ENCODE measurements at regions of chr11 and their contacts with region 1.

Region 1: DNA sequence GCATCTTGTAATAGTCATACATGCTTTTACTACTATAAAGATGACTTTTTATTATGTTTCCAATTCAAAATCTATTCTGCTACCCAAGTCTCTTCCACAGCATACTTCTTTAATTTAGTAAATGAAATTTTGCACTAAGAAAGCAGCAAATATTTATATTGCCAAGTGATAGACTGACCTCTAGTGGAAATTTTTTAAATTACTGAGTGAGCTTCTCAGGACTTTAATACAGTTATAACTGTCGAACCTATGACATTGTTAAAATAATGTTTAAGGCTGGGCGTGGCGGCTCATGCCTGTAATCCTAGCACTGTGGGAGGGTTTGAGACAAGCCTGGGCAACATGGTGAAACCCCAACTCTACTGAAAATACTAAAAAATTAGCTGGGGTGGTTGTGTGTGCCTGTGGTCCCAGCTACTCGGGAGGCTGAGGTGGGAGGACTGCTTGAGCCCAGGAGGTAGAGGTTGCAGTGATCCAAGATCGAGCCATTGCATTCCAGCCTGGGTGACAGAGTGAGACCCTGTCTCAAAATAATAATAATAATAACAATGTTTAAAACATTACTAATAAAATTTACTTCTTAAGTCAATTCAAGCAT is 27.3 kb downstream of the STK33 start:
- DNase-seq: no peak
- H3K4me3 ChIP-seq: no peak overlapping the region
- H3K27ac ChIP-seq: no peak overlapping the region
- H3K4me1 ChIP-seq: no peaks in the 10 kb centered on the region
- H3K27me3 ChIP-seq: no peaks in the 10 kb centered on the region
- CTCF ChIP-seq: peak in 3 of 4 experiments; percentile 66 to 76 (median 75)
- POLR2A ChIP-seq: no peak

Region 2: DNA sequence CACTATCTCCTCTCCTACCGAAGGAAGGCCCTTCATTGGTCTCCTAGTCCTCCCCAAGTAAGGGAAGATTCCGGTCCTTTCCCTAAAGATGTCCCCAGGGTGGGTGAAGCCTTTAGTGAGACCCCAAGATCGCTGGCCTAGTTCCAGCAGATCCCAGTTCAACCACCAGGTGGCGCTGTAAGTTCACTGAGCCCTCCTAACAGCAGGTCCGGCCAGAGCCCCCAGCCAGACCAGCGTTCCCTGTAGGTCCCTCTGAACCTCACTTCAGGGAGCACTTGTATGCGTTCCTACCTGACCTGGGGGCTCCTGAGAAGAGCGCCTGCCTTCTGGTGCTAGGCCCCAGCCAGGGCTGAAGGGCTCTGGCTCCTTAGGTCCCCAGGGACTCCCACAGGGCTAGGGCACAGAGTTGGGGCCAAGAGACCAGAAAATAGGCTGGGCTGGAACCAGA is 341.1 kb before region 1 on chr11:
- intact Hi-C with region 1: loop called (anchors 5 kb)
- DNase-seq: peak; percentile 63
- H3K4me3 ChIP-seq: no peak overlapping the region
- H3K27ac ChIP-seq: no peak overlapping the region
- H3K4me1 ChIP-seq: no peaks in the 10 kb centered on the region
- H3K27me3 ChIP-seq: no peaks in the 10 kb centered on the region
- CTCF ChIP-seq: peak; percentile 87 to 96 (median 92)
- POLR2A ChIP-seq: no peak

Region 3: GRCh38 chr11:8328848-8329330 is 237.8 kb before region 1 on chr11:
- intact Hi-C with region 1: loop called (anchors 5 kb)
- DNase-seq: peak; percentile 38
- H3K4me3 ChIP-seq: no peak overlapping the region
- H3K27ac ChIP-seq: no peak overlapping the region
- H3K4me1 ChIP-seq: no peaks in the 10 kb centered on the region
- H3K27me3 ChIP-seq: no peaks in the 10 kb centered on the region
- CTCF ChIP-seq: peak; percentile 41 to 67 (median 44)
- POLR2A ChIP-seq: no peak

Region 4: DNA sequence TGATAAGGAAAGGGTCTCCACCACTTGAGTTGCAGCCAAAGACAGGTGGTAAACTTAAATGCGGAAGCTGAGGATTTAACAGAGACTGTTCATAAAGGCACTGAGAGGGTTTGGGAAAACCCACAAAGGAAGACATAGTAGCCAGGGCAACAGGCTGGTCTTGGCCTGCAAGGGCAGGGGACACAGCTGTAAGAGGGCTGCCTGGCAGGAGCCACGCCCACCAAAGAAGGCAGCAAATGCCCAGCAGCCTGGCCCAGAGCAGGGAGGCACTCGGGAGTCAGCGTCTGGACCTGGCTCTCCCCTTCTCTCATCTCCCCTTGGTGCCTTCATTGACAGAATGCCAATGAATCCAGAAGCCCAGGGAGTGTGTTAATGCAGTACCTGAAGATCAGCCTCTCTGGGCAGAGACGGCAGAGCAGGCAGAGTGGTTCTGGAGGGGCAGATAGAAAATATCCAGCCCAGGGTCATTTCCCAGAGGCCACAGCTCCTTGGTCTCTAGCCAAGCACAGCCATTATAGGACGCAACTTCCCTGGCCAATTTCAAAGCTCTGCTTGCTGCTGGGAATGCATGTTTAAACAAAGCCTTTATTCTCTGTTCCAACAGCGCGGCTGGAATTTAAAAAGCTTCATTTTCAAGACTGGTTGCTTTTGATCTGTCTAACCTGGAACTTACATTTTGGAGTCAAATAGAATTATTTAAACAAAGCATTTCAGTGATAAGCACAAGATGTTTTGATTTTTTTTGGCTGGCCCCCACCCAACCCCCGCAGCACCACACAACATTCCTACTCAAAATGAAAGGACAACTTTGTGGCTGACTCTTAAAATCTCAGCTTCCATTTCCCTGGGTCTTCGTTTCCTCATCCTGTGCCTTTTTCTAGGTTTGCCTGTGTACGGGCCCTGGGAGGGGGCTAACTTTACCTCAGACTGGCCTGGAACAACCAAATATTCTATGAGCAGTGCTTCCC is 177.4 kb before region 1 on chr11:
- intact Hi-C with region 1: loop called (anchors 5 kb)
- DNase-seq: no peak
- H3K4me3 ChIP-seq: no peak overlapping the region
- H3K27ac ChIP-seq: peak overlapping the region; percentile 22 to 51
- H3K4me1 ChIP-seq: no peaks in the 10 kb centered on the region
- H3K27me3 ChIP-seq: no peaks in the 10 kb centered on the region
- CTCF ChIP-seq: no peak
- POLR2A ChIP-seq: no peak

Region 5: DNA sequence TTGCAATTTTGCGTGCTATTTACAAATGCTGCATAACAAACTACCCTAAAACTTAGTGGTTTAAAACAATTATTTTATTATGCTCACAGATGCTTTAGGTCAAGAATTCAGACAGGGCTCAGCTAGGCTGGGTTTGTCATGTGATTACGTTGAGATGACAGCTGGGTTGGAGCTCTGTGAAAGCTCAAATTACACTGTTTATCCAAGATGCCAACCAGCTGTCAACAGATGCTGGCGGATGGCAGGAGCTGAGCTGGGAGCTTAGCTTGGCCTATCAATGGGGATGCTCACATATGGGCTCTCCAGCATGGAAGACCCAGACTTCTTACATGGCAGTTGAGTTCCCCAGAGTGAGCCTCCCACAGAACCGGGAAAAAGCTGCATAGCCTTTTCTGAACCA is 35.4 kb before region 1 on chr11:
- intact Hi-C with region 1: no loop called
- DNase-seq: no peak
- H3K4me3 ChIP-seq: no peak overlapping the region
- H3K27ac ChIP-seq: no peak overlapping the region
- H3K4me1 ChIP-seq: no peaks in the 10 kb centered on the region
- H3K27me3 ChIP-seq: no peaks in the 10 kb centered on the region
- CTCF ChIP-seq: no peak
- POLR2A ChIP-seq: no peak